Endothelial cell of umbilical vein (primary cell): ENCODE measurements at regions of chr4 and their contacts with region 1.

Region 1: DNA sequence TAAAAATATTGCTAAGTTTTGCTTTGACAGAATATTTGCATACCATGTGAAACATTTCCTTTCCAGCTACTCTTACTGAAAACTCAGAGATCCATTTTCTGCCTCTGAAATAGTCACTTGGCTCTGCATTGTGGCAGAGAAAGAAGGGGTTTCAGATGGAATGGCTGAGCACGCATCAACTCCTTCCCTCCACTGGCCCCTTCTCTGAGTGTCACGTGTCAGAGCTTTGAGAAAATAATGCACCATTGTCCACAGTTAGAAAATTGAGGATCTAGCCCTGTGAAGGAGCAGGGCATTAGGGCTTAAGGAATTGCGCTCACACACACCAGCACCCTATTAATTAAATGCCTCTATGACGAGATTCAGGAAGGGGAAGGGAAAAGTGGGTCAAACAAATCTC is 78.8 kb upstream of the FAT4 start:
- DNase-seq: no peak
- H3K4me3 ChIP-seq: no peak overlapping the region
- H3K27ac ChIP-seq: no peak overlapping the region
- H3K4me1 ChIP-seq: no peaks in the 10 kb centered on the region
- H3K27me3 ChIP-seq: no peaks in the 10 kb centered on the region
- CTCF ChIP-seq: no peak
- POLR2A ChIP-seq: no peak

Region 2: DNA sequence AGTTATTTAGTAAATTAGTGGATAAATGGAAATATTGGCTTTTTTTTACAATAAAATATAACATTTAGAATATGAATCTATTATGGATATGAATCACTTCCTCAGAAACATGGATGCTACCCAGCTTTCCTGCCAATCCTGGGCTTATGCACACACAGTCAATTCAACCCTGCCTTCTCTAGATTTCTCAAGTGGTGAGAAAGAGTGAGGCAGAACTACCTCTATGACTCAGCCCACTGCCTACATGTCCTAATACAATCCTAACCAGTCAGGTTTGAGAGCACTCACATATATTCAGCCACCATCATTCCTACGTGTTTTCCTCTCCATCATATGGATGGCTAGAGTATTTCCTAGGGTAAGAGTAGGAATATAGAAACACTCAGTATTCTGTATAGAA is 432.3 kb before region 1 on chr4:
- CTCF ChIA-PET with region 1: no interaction called
- POLR2A ChIA-PET with region 1: no interaction called
- dilution Hi-C with region 1: no loop called
- intact Hi-C with region 1: loop called (anchors 10 kb)
- DNase-seq: peak; percentile 59
- H3K4me3 ChIP-seq: no peak overlapping the region
- H3K27ac ChIP-seq: no peak overlapping the region
- H3K4me1 ChIP-seq: peaks cover 3% of the 10 kb centered on the region
- H3K27me3 ChIP-seq: no peaks in the 10 kb centered on the region
- CTCF ChIP-seq: no peak
- POLR2A ChIP-seq: no peak

Region 3: DNA sequence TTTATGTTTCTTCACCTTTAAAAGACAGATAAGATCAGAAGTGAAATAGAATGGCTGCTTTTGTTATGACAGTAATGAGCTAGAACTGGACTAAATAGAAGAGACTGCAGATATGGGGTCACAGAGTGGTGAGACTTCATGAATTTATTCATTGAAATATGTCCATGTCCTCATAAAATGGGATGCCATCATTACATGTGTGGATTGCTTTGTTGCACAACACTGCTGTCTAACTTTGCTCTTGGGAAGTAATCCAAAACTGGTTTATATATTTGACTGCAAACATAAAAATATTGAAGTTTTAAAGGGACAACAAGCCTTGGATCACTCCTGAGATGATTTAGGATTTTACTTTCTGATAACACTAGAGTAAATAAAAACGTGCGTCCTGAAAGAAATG is 130.4 kb before region 1 on chr4:
- CTCF ChIA-PET with region 1: no interaction called
- POLR2A ChIA-PET with region 1: no interaction called
- dilution Hi-C with region 1: no loop called
- intact Hi-C with region 1: no loop called
- DNase-seq: no peak
- H3K4me3 ChIP-seq: no peak overlapping the region
- H3K27ac ChIP-seq: no peak overlapping the region
- H3K4me1 ChIP-seq: no peaks in the 10 kb centered on the region
- H3K27me3 ChIP-seq: no peaks in the 10 kb centered on the region
- CTCF ChIP-seq: no peak
- POLR2A ChIP-seq: no peak

Region 4: GRCh38 chr4:125131893-125132680 is 103.9 kb before region 1 on chr4:
- CTCF ChIA-PET with region 1: no interaction called
- POLR2A ChIA-PET with region 1: no interaction called
- dilution Hi-C with region 1: no loop called
- intact Hi-C with region 1: no loop called
- DNase-seq: no peak
- H3K4me3 ChIP-seq: no peak overlapping the region
- H3K27ac ChIP-seq: no peak overlapping the region
- H3K4me1 ChIP-seq: no peaks in the 10 kb centered on the region
- H3K27me3 ChIP-seq: no peaks in the 10 kb centered on the region
- CTCF ChIP-seq: no peak
- POLR2A ChIP-seq: no peak

Region 5: GRCh38 chr4:125187226-125188176 is 48.5 kb before region 1 on chr4:
- CTCF ChIA-PET with region 1: no interaction called
- POLR2A ChIA-PET with region 1: no interaction called
- dilution Hi-C with region 1: no loop called
- intact Hi-C with region 1: no loop called
- DNase-seq: peak; percentile 67
- H3K4me3 ChIP-seq: no peak overlapping the region
- H3K27ac ChIP-seq: peak overlapping the region; percentile 2
- H3K4me1 ChIP-seq: peaks cover 6% of the 10 kb centered on the region
- H3K27me3 ChIP-seq: no peaks in the 10 kb centered on the region
- CTCF ChIP-seq: no peak
- POLR2A ChIP-seq: no peak

Region 6: DNA sequence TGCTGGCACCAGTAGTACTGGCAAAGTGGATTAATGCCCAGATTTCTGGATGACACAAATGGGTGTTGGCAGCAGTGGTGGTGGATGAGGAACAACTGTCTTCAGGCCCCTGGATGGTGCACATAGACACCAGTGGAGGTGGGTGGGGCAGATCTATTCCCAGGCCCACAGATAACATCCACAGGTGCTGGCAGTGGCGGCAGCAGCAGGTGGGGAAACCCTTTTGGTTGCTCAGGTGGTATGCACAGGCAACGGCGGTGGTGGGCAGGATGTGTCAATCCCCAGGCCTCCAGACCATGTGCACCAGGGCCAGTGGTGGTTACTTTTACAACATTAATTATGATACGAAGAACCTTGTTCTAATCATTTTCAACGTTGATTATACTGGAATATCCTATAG is 29.9 kb after region 1 on chr4:
- CTCF ChIA-PET with region 1: no interaction called
- POLR2A ChIA-PET with region 1: no interaction called
- dilution Hi-C with region 1: no loop called
- intact Hi-C with region 1: no loop called
- DNase-seq: no peak
- H3K4me3 ChIP-seq: no peak overlapping the region
- H3K27ac ChIP-seq: no peak overlapping the region
- H3K4me1 ChIP-seq: no peaks in the 10 kb centered on the region
- H3K27me3 ChIP-seq: no peaks in the 10 kb centered on the region
- CTCF ChIP-seq: no peak
- POLR2A ChIP-seq: no peak